Activated B cell treated with CpG ODN at 0.5 μM for 24 hours (primary cell): ENCODE measurements at regions of chr9 and their contacts with region 1.

Region 1: DNA sequence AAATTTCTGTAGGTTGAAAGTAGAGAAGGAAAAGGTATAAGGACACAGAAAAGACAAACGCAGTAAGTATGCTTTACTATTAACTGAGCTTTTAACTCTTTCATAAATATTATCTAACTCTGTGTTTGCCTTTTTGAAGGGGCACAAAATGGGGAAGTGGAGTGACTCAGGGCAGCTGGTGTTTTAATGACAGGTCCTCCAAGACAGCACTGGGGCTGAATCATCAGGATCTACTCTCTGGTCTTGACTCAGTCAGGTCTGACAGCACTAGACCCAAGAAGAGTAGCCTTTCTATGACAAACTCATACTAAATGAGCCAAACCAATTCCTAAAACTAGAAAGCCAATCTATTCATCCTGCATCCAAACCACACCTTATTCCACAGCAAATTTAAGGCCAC is 102.2 kb downstream of the APTX start:
- DNase-seq: no peak
- ATAC-seq: no peak
- H3K4me3 Mint-ChIP-seq: no peak overlapping the region
- H3K27ac Mint-ChIP-seq: no peak overlapping the region
- H3K4me1 Mint-ChIP-seq: no peaks in the 10 kb centered on the region
- H3K27me3 Mint-ChIP-seq: peaks cover 55% of the 10 kb centered on the region
- CTCF ChIP-seq: no peak

Region 2: GRCh38 chr9:32627394-32627944 is 271.7 kb before region 1 on chr9:
- CTCF ChIA-PET with region 1: no interaction called
- POLR2A ChIA-PET with region 1: no interaction called
- intact Hi-C with region 1: no loop called
- DNase-seq: no peak
- ATAC-seq: no peak
- H3K4me3 Mint-ChIP-seq: no peak overlapping the region
- H3K27ac Mint-ChIP-seq: no peak overlapping the region
- H3K4me1 Mint-ChIP-seq: no peaks in the 10 kb centered on the region
- H3K27me3 Mint-ChIP-seq: no peaks in the 10 kb centered on the region
- CTCF ChIP-seq: no peak

Region 3: GRCh38 chr9:32954642-32955041 is 55.5 kb after region 1 on chr9:
- CTCF ChIA-PET with region 1: no interaction called
- POLR2A ChIA-PET with region 1: no interaction called
- intact Hi-C with region 1: loop called (anchors 10 kb)
- DNase-seq: no peak
- ATAC-seq: no peak
- H3K4me3 Mint-ChIP-seq: no peak overlapping the region
- H3K27ac Mint-ChIP-seq: no peak overlapping the region
- H3K4me1 Mint-ChIP-seq: no peaks in the 10 kb centered on the region
- H3K27me3 Mint-ChIP-seq: no peaks in the 10 kb centered on the region
- CTCF ChIP-seq: no peak

Region 4: DNA sequence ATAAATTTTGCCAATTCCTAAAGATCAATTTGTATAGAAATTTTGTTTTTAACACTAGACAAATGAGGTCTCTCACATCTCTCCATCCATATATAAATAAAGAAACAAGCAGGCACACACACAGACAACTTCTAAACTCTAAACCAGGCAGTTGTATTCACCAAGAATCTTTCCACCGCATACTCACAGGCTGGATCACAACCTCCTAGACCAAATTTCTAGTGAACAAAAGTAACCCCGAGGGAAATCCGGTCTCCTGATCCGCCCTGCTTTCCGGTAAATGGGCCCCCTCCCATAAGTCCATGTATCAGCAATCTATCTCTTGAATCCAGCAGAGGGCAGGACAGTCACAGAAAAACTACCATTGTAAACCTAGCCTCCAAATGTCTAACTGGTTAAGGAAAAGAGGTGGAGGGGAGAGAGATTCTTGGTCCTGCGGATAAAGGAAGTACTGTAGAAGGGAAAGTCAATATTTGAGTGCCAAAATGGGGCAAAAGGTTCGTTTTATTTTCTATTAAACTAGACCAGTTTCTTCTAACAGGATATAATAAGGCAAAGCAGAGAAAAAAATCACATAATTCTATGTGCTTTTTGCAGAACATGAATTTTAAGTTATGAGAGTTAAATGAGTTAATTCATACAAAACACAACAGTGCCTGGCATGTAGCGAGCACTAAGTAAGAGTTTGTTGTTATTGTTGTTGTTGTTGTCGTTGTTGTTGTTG is 182.1 kb after region 1 on chr9:
- CTCF ChIA-PET with region 1: no interaction called
- POLR2A ChIA-PET with region 1: no interaction called
- intact Hi-C with region 1: no loop called
- DNase-seq: no peak
- ATAC-seq: peak; percentile 22
- H3K4me3 Mint-ChIP-seq: no peak overlapping the region
- H3K27ac Mint-ChIP-seq: no peak overlapping the region
- H3K4me1 Mint-ChIP-seq: peaks cover 26% of the 10 kb centered on the region
- H3K27me3 Mint-ChIP-seq: no peaks in the 10 kb centered on the region
- CTCF ChIP-seq: peak; percentile 60